ENCODE measurements at regions of chr5 and their contacts with region 1.

Region 1: DNA sequence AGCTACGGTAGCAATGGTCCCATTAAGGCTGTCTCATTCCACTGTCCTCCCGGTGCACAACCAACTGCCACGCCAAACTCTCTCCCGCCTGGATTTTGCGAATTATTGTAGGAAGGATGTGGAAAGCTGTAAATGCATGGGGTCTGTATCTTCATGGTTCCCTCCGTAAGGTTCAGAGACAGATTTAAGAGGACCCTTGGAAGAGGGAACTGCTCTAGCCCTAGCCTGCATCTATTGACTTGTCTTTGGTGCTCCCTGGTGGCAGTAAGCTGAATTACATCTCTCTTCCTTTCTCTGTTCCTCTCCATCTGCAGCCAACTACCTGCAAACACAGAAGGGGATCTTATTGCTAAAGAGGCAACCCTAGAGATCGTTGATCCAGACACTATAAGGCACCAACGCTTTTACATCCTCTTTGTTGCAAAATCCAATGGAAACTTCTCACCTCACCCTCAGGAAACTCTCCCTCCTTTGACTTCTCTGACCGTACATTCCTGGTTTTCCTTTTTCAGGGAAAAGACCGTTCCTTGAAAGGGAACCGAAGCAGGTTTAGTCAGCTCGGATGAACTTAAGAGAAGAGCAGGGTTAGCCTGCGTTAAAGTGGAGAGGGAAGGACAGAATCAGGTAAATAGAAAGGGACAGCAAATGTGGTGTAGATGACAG is 11.9 kb downstream of the CAPSL start:
- DNase-seq: peak in 4 of 5 donors; percentile 10 to 56 (median 34)
- H3K4me3 ChIP-seq: no peak overlapping the region
- H3K27ac ChIP-seq: no peak overlapping the region
- H3K4me1 ChIP-seq: no peaks in the 10 kb centered on the region
- H3K27me3 ChIP-seq: no peaks in the 10 kb centered on the region
- CTCF ChIP-seq: peak; percentile 51 to 82 (median 71)
- EP300 ChIP-seq: no peak
- POLR2A ChIP-seq: no peak

Region 2: DNA sequence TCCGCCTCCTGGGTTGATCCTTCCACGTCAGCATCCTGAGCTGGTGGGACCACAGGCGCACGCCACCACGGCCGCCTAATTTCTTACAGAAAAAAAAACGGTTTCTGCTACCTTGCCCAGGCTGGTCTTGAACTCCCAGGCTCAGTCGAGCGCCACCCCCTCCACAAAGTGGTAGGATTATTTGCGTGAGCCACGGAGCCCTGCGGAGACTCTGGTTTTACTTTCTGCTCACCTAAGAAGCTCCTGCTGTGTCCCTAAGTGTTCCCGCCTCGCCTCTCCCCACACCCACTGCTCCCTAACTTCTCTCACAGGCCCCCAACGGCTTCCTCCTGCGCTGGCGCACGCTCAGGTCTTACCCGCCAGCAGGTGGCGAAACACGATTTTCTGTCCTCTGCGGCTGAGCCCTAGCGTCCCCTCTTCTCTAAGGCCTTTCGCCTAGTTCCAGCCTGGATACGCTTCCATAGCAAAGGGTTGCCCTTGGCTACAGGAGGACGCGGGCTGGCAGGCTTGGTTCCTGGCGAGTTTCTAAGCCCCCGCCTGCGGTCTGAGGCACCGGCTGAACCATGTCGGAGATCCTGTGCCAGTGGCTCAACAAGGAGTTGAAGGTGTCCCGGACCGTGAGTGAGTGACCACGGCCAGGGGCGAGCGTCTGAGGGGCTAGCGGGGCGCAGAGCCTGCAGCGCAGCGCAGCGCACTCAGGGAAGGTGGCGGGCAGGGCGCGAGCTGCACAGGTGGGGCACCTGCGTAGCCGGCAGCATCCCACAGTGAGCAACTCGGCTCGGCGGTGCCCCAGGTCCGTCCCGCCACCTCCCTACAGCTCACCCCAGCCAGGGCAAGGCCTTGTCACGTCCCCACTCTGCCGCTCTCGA is 308.9 kb before region 1 on chr5 and contains the start of gene SPEF2:
- intact Hi-C with region 1: loop called in 3 of 4 experiments (anchors 5 to 10 kb)
- DNase-seq: peak; percentile 70 to 87 (median 82)
- H3K4me3 ChIP-seq: peak within 1 kb of the TSS; percentile 78
- H3K27ac ChIP-seq: no peak within 1 kb of the TSS
- H3K4me1 ChIP-seq: peaks cover 2% of the 10 kb centered on the region
- H3K27me3 ChIP-seq: no peaks in the 10 kb centered on the region
- CTCF ChIP-seq: peak; percentile 59 to 78 (median 73)
- EP300 ChIP-seq: no peak
- POLR2A ChIP-seq: no peak
- total RNA-seq, gene SPEF2: 4.2 to 31.8 (median 9.0) TPM

Region 3: GRCh38 chr5:35777358-35778087 is 149.0 kb before region 1 on chr5:
- intact Hi-C with region 1: loop called in 3 of 4 experiments (anchors 5 to 10 kb)
- DNase-seq: peak; percentile 49 to 73 (median 60)
- H3K4me3 ChIP-seq: no peak overlapping the region
- H3K27ac ChIP-seq: no peak overlapping the region
- H3K4me1 ChIP-seq: peaks cover 3% of the 10 kb centered on the region
- H3K27me3 ChIP-seq: no peaks in the 10 kb centered on the region
- CTCF ChIP-seq: peak; percentile 5 to 27 (median 23)
- EP300 ChIP-seq: no peak
- POLR2A ChIP-seq: no peak